CD4-positive, alpha-beta memory T cell (primary cell): ENCODE measurements at regions of chr10 and their contacts with region 1.

Region 1: GRCh38 chr10:4849555-4850242 is 23.7 kb downstream of the AKR1E2 start:
- DNase-seq: peak; percentile 75 to 87 (median 80)
- H3K4me3 ChIP-seq: no peak overlapping the region
- H3K4me3 Mint-ChIP-seq: peak overlapping the region in 4 of 8 donors; percentile 7 to 46 (median 26)
- H3K27ac ChIP-seq: no peak overlapping the region
- H3K27ac Mint-ChIP-seq: peak overlapping the region in 5 of 7 donors; percentile 10 to 84 (median 63)
- H3K4me1 ChIP-seq: peaks cover 4% of the 10 kb centered on the region
- H3K4me1 Mint-ChIP-seq: peaks cover 6 to 9% (median 8%) of the 10 kb centered on the region in 4 donors
- H3K27me3 ChIP-seq: no peaks in the 10 kb centered on the region
- H3K27me3 Mint-ChIP-seq: peaks cover 0 to 2% of the 10 kb centered on the region in 2 donors

Region 2: DNA sequence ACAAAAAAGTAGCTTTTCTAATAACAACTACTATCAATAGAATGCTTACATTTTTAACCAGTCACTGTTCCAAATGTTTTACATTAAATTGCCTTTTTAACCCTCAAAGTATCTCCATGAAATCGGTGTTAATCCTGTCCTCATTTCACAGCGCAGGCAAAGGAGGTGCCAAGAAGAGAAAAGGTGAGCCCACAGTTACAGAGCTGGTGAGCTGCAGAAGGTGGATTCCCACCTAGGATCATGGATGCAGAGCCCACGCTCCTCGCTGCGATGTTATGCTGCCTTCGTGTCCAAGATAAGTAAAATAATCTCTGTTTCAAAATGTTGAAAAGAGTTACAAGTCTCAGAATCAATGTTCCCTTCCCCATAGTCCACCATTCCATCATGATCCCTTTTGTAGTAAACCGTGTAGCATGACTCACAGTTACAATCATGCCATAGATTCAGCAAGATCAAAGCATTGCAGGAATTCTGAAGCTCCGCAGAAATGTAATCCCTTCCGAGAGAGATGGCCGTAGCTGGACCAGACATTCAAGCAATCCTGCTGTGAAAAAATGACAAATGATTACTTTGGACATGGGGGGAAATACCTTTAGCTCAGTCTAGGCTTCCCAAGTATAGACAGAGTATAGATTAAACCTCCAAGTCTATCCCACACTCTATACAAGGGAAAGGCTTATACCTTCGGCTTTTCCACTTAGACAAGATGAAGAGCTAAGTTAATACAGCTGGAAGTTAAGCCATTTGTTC is 418.4 kb before region 1 on chr10:
- CTCF ChIA-PET with region 1: no interaction called
- POLR2A ChIA-PET with region 1: no interaction called
- intact Hi-C with region 1: no loop called
- DNase-seq: no peak
- H3K4me3 ChIP-seq: no peak overlapping the region
- H3K4me3 Mint-ChIP-seq: no peak overlapping the region
- H3K27ac ChIP-seq: no peak overlapping the region
- H3K27ac Mint-ChIP-seq: no peak overlapping the region
- H3K4me1 ChIP-seq: no peaks in the 10 kb centered on the region
- H3K4me1 Mint-ChIP-seq: peaks cover 0 to 2% (median 0%) of the 10 kb centered on the region in 4 donors
- H3K27me3 ChIP-seq: no peaks in the 10 kb centered on the region
- H3K27me3 Mint-ChIP-seq: peaks cover 0 to 1% of the 10 kb centered on the region in 2 donors

Region 3: GRCh38 chr10:4825851-4826665 is 23.6 kb before region 1 on chr10 and contains the start of gene AKR1E2:
- CTCF ChIA-PET with region 1: interaction called, 62 read pairs
- POLR2A ChIA-PET with region 1: interaction called, 3 read pairs
- intact Hi-C with region 1: no loop called
- DNase-seq: peak; percentile 80 to 88 (median 87)
- H3K4me3 ChIP-seq: peak within 1 kb of the TSS in 1 of 2 donors; percentile 36
- H3K4me3 Mint-ChIP-seq: peak within 1 kb of the TSS; percentile 71 to 86 (median 83)
- H3K27ac ChIP-seq: peak within 1 kb of the TSS; percentile 32
- H3K27ac Mint-ChIP-seq: peak within 1 kb of the TSS; percentile 65 to 95 (median 89)
- H3K4me1 ChIP-seq: no peaks in the 10 kb centered on the region
- H3K4me1 Mint-ChIP-seq: peaks cover 7 to 25% (median 10%) of the 10 kb centered on the region in 4 donors
- H3K27me3 ChIP-seq: no peaks in the 10 kb centered on the region
- H3K27me3 Mint-ChIP-seq: peaks cover 9 to 20% of the 10 kb centered on the region in 2 donors
- total RNA-seq, gene AKR1E2: 9.2 to 9.8 TPM

Region 4: GRCh38 chr10:4981722-4982471 is 132.2 kb after region 1 on chr10:
- CTCF ChIA-PET with region 1: no interaction called
- POLR2A ChIA-PET with region 1: no interaction called
- intact Hi-C with region 1: loop called (anchors 5 kb)
- DNase-seq: peak in 2 of 5 donors; percentile 1 to 5
- H3K4me3 ChIP-seq: no peak overlapping the region
- H3K4me3 Mint-ChIP-seq: no peak overlapping the region
- H3K27ac ChIP-seq: no peak overlapping the region
- H3K27ac Mint-ChIP-seq: peak overlapping the region in 1 of 7 donors; percentile 19
- H3K4me1 ChIP-seq: no peaks in the 10 kb centered on the region
- H3K4me1 Mint-ChIP-seq: peaks cover 0 to 2% (median 0%) of the 10 kb centered on the region in 4 donors
- H3K27me3 ChIP-seq: no peaks in the 10 kb centered on the region
- H3K27me3 Mint-ChIP-seq: peaks cover 2 to 15% of the 10 kb centered on the region in 2 donors

Region 5: DNA sequence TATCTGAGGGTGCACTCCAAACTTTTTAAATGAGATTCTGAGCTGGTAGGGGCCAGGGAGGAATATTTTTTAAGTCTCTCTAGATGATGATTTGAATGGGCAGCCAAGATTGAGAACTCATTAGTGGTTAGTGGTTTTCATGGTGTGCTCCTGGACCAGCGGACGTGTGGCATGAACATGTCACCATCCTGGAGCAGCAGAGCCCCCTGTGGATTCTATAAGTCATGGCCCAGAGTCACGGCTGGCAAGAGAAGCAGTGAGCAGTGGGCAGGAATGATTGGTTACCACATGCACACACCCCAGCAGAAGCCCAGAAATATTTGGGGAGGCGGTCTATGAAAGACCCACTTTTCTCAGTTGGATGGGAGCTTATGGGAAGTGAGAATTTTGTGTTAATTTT is 493.9 kb after region 1 on chr10:
- CTCF ChIA-PET with region 1: interaction called, 19 read pairs
- POLR2A ChIA-PET with region 1: no interaction called
- intact Hi-C with region 1: loop called (anchors 1 kb)
- DNase-seq: peak in 3 of 5 donors; percentile 3 to 19 (median 14)
- H3K4me3 ChIP-seq: no peak overlapping the region
- H3K4me3 Mint-ChIP-seq: no peak overlapping the region
- H3K27ac ChIP-seq: no peak overlapping the region
- H3K27ac Mint-ChIP-seq: no peak overlapping the region
- H3K4me1 ChIP-seq: no peaks in the 10 kb centered on the region
- H3K4me1 Mint-ChIP-seq: peaks cover 1 to 9% (median 5%) of the 10 kb centered on the region in 4 donors
- H3K27me3 ChIP-seq: no peaks in the 10 kb centered on the region
- H3K27me3 Mint-ChIP-seq: peaks cover 0 to 2% of the 10 kb centered on the region in 2 donors

Region 6: DNA sequence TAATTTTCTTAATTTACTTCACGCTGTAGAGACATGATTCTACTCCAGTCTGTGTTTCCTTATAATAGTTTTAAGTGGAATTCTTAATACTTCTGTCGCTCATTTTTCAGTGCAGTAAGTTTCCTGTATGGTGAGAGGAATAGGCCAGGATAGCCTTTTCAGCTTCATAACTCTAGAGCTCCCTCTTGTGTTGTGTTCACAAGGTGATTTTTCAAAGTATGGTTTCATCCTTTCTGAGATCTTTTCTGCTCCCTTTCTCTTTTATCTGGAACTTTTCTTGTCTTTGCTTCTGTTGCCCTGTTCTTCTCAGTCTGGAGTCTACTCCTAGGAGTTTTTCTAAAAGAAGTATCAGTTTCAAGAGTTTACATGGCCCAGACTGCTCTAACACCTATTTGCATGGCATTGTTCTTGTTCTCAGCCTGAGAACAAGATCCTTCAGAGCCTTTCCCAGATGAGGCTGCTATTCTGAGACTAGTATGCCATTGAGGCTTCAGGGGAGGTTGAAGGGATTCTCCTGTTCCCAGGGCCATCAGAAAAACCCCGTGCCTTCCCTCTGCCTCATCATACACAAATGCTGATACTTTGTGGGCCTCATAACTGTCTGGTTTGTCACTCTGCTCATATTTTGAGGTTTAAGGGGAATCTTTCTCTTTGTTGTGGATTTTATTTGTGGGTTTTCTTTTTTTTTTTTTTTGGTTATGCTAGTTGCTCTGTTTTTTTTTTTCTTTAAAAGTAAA is 584.5 kb after region 1 on chr10:
- CTCF ChIA-PET with region 1: interaction called, 123 read pairs
- POLR2A ChIA-PET with region 1: interaction called, 8 read pairs
- intact Hi-C with region 1: loop called (anchors 1 kb)
- DNase-seq: peak in 4 of 5 donors; percentile 32 to 46 (median 40)
- H3K4me3 ChIP-seq: no peak overlapping the region
- H3K4me3 Mint-ChIP-seq: peak overlapping the region in 5 of 8 donors; percentile 25 to 45 (median 37)
- H3K27ac ChIP-seq: no peak overlapping the region
- H3K27ac Mint-ChIP-seq: peak overlapping the region in 6 of 7 donors; percentile 28 to 90 (median 84)
- H3K4me1 ChIP-seq: peaks cover 6% of the 10 kb centered on the region
- H3K4me1 Mint-ChIP-seq: peaks cover 6 to 13% (median 11%) of the 10 kb centered on the region in 4 donors
- H3K27me3 ChIP-seq: no peaks in the 10 kb centered on the region
- H3K27me3 Mint-ChIP-seq: no peaks in the 10 kb centered on the region